HEK293 (cell line): ENCODE measurements at regions of chr6 and their contacts with region 1.

Region 1: DNA sequence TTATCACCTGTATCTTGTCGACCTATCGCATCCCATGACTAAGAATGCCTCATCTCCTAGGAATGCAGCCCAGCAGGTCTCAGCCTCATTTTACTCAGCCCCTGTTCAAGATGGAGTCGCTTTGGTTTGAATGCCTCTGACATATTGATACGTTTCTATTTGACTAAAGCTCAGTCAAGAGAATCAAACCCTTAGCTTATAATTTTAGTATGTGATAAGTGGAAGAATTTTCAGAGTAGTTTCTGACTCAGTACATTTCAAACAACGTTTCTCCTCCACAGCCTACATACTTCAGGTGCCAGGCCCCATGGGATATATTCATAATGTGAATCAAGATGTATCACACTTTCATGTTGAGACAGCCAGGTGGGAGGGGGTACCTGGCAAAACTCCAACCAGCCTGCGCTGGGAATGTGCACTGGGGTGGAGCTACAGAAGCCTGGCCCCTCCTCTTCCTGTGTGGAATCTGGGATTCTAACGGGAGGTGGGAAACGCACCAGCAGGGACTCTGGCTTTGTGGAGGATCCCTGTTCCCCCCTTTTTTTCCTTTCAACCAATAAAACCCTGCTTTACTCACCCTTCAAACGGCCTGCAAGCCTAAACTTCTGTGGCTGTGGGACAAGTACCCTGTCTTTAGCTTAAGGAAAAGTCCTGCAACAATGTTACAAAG is 6.8 kb upstream of the SEC63 start:
- H3K4me3 ChIP-seq: no peak overlapping the region
- H3K27ac ChIP-seq: no peak overlapping the region
- H3K4me1 ChIP-seq: no peaks in the 10 kb centered on the region
- CTCF ChIP-seq: no peak

Region 2: GRCh38 chr6:107977283-107977682 is 12.5 kb after region 1 on chr6:
- CTCF ChIA-PET with region 1: interaction called, 52 read pairs
- POLR2A ChIA-PET with region 1: no interaction called
- H3K4me3 ChIP-seq: no peak overlapping the region
- H3K27ac ChIP-seq: no peak overlapping the region
- H3K4me1 ChIP-seq: no peaks in the 10 kb centered on the region
- CTCF ChIP-seq: 0 out of 2 replicates have a peak, but pooled peaks have one; percentile 11